ENCODE measurements at regions of chr4 and their contacts with region 1.

Region 1: GRCh38 chr4:121726642-121727268 is 30.0 kb upstream of the ANXA5 start:
- DNase-seq: peak in 1 of 4 donors; percentile 50
- ATAC-seq: peak; percentile 98
- H3K4me3 ChIP-seq: no peak overlapping the region
- H3K27ac ChIP-seq: no peak overlapping the region
- H3K4me1 ChIP-seq: no peaks in the 10 kb centered on the region
- H3K27me3 ChIP-seq: no peaks in the 10 kb centered on the region
- CTCF ChIP-seq: peak; percentile 57 to 76

Region 2: DNA sequence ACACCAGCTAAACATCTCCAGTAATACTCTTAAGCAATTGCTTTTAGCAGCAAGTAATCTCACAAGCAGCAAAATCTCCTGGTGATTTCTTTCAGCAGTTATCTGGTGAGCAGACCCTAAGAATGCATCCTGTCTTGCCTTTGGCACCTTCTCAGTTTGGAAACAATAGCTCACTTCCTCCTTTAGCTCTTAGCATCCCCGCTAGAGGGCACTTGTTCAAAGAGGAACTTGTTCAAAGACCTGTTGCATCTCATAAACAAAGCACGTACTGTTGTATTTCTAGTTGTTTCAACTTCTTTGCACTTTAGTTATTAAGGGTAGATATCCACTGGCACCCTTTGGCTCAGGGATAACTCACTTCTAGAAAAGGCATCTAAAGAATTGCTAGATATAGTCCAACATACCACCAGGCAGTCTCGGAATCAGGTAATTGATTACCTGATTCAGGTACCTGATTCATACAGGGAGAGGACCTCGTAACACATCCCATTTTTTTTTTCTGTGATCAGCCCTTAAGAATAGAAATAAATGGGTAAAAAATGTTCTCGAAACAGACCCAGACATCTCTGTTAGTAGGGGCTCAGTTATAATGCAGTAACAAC is 264.0 kb before region 1 on chr4:
- intact Hi-C with region 1: loop called in 1 of 2 experiments (anchors 10 kb)
- DNase-seq: peak in 2 of 4 donors; percentile 30 to 66
- ATAC-seq: peak; percentile 90
- H3K4me3 ChIP-seq: no peak overlapping the region
- H3K27ac ChIP-seq: no peak overlapping the region
- H3K4me1 ChIP-seq: no peaks in the 10 kb centered on the region
- H3K27me3 ChIP-seq: no peaks in the 10 kb centered on the region
- CTCF ChIP-seq: peak; percentile 45 to 60

Region 3: GRCh38 chr4:121957266-121957665 is 230.5 kb after region 1 on chr4:
- intact Hi-C with region 1: no loop called
- DNase-seq: no peak
- ATAC-seq: no peak
- H3K4me3 ChIP-seq: no peak overlapping the region
- H3K27ac ChIP-seq: no peak overlapping the region
- H3K4me1 ChIP-seq: no peaks in the 10 kb centered on the region
- H3K27me3 ChIP-seq: peaks cover 3 to 29% of the 10 kb centered on the region in 2 donors
- CTCF ChIP-seq: no peak